OCI-LY7 (cell line): ENCODE measurements at regions of chr6 and their contacts with region 1.

Region 1: DNA sequence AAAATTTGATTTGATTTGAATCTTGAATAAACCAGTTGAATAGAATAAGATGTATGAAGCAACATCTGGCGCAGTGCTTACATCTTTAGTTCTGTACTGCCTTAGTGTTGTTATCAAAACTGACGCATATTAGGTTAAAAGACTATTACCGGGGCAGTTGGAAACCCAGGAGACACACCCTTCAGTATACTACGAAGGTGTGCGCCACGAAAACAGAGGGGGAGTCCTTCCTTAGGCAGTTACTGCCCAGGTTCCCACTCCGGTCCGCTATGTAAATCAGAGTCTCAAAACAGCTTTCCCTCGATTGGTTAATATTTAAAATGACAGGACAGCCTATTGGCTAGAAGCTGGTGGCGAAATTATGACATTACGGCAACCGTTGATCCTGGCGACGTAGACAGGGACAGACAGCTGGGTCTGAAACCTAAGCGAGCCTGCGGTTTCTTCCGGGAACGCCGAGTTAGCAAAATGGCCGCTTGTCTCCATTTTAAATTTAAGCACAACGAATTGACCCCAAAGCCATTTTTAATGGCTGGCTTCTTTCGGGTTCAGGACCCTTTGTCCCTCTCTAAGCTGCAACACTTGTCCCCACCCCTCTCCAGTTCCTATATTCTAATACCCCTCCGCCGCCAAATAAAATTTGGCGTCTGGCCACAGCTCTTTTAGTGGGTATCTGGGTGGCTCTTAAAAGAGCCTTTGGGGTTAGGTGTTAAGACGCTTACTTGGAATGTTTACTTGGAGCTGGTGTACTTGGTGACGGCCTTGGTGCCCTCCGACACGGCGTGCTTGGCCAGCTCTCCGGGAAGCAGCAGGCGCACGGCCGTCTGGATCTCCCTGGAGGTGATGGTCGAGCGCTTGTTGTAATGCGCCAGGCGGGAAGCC is 35.8 kb downstream of the HFE start:
- DNase-seq: peak; percentile 99
- H3K4me3 ChIP-seq: peak overlapping the region; percentile 72
- H3K27ac ChIP-seq: peak overlapping the region; percentile 99
- H3K4me1 ChIP-seq: peaks cover 60% of the 10 kb centered on the region
- CTCF ChIP-seq: no peak

Region 2: DNA sequence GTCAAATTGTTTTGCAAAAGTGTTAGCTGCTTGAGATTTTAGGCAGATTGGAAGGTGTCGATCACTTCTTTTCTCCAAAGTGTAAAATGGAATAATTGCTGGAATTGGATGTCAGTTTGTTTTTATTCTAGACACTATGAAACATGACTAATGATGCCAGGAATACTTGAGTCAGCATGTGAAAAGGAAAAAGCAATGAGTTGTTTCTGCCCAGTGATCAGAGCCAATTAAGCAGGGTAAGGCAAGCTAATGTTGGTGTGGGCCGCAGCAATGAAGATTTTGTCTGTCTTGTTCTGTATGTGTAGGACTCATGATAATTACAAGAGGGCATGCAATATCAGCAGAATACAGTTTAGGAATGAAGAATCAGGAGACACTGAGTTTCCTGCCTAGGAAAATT is 733.6 kb before region 1 on chr6:
- CTCF ChIA-PET with region 1: no interaction called
- POLR2A ChIA-PET with region 1: interaction called, 4 read pairs
- intact Hi-C with region 1: loop called (anchors 10 kb)
- DNase-seq: no peak
- H3K4me3 ChIP-seq: peak overlapping the region; percentile 60
- H3K27ac ChIP-seq: peak overlapping the region; percentile 99
- H3K4me1 ChIP-seq: peaks cover 94% of the 10 kb centered on the region
- CTCF ChIP-seq: no peak

Region 3: DNA sequence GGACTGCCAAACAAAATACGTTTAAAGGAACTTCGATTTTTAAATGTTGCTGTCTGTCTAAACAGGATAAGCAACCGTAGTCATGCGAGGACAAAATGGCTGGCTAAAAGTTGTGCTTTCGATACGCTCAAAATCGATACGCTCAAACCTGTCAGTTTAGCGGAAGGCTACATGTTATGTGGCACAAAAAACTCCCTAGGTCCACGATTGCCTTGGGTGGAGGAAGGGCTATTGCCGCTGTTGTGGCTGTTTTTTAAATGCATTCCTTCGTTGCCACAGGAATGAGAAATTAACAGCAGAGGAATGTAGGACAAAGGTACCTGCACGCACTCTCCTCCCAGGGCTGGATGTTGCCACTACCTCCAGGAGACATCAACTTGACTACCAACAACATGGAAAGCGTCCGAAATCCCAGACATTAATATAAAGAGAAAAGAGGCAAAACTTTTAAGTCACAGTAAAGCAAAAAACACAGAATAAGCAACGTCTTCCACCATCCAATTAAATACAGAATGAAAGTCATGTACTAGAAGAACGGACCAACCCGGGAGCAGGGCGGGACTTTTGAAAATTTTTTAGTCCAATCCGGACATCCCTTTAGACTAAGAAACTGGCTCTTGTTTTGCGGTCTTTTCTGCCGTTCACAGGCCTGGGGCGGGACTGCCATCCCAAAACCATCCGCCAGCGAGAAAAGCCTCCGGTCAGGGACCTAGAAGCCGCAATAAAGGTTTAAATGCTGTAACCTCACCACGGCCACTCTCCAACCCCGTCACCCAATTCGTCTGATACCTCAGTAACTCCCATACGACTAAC is 68.0 kb before region 1 on chr6:
- CTCF ChIA-PET with region 1: no interaction called
- POLR2A ChIA-PET with region 1: interaction called, 23 read pairs
- intact Hi-C with region 1: loop called (anchors 1 kb)
- DNase-seq: peak; percentile 93
- H3K4me3 ChIP-seq: peak overlapping the region; percentile 70
- H3K27ac ChIP-seq: peak overlapping the region; percentile 93
- H3K4me1 ChIP-seq: peaks cover 41% of the 10 kb centered on the region
- CTCF ChIP-seq: no peak

Region 4: GRCh38 chr6:26156076-26156849 is 33.2 kb after region 1 on chr6:
- CTCF ChIA-PET with region 1: no interaction called
- POLR2A ChIA-PET with region 1: interaction called, 330 read pairs
- intact Hi-C with region 1: loop called (anchors 1 kb)
- DNase-seq: peak; percentile 88
- H3K4me3 ChIP-seq: peak overlapping the region; percentile 79
- H3K27ac ChIP-seq: peak overlapping the region; percentile 99
- H3K4me1 ChIP-seq: peaks cover 28% of the 10 kb centered on the region
- CTCF ChIP-seq: no peak

Region 5: DNA sequence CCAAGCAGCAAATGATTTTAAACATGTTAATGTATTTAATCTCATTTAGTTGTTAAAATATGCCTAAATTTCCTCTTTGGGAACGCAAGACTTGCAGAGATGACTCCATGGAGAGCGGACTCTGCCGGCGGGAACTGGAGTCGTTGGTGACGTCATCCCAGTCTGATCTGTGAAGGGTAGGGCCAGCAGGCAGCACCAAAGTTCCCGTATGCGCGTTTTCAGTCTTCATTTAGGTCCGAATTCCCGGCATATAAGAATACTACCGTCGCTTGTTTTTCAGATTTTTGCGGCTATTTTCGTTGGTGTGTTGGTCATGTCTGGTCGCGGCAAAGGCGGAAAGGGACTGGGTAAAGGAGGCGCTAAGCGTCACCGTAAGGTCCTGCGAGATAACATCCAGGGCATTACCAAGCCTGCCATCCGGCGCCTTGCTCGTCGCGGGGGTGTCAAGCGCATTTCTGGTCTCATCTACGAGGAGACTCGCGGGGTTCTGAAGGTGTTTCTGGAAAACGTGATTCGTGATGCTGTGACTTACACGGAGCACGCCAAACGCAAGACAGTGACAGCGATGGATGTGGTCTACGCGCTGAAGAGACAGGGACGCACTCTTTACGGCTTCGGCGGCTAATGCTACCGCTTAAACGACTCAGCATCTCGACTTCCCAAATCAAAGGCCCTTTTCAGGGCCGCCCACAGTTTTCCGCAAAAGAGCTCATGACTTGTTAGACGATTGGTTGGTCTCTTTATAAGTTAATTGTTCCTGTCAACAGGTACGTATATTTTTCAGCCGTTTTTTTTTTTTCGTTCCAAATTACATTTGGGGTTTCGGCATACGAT is 81.5 kb after region 1 on chr6:
- CTCF ChIA-PET with region 1: no interaction called
- POLR2A ChIA-PET with region 1: interaction called, 76 read pairs
- intact Hi-C with region 1: loop called (anchors 2 kb)
- DNase-seq: peak; percentile 98
- H3K4me3 ChIP-seq: peak overlapping the region; percentile 79
- H3K27ac ChIP-seq: peak overlapping the region; percentile 93
- H3K4me1 ChIP-seq: peaks cover 63% of the 10 kb centered on the region
- CTCF ChIP-seq: peak; percentile 61

Region 6: DNA sequence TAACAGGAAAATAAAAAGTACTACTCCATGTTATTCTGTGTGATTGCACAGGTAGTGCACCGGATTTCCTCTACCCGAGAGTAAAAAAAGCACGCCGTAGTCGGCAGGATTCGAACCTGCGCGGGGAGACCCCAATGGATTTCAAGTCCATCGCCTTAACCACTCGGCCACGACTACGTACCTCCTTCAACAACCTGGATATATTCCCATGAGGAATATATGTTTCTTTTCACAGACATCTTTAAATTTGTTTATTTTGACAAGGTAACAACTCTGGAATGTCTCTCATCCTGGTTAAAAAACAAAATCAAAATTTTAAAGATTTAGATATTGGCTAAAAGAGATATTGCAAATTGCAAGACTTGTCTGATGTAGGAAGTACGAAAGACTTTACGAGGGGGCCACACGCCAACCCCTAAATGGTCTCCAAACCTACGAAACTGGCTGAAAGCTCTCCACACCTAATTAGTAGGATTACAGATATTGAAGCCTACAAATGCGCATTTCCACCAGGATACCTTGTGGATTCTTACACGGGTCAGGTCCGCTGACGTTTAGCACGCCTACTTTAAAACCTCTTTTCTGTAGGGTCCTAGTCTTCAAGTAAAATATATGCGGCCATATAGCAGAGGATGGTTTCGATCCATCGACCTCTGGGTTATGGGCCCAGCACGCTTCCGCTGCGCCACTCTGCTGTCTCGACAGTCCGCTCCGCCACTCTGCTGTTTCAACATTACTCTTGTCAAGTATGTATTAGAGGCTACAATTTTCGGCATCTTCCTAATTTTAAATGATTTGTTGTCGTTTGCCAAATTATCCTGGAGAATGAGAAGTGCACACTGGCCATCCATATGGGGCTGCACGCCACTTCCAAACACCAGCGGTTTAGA is 189.7 kb after region 1 on chr6:
- CTCF ChIA-PET with region 1: no interaction called
- POLR2A ChIA-PET with region 1: no interaction called
- intact Hi-C with region 1: no loop called
- DNase-seq: peak; percentile 80
- H3K4me3 ChIP-seq: peak overlapping the region; percentile 71
- H3K27ac ChIP-seq: peak overlapping the region; percentile 43
- H3K4me1 ChIP-seq: peaks cover 28% of the 10 kb centered on the region
- CTCF ChIP-seq: no peak

Region 7: GRCh38 chr6:27132532-27133280 is 1009.7 kb after region 1 on chr6:
- CTCF ChIA-PET with region 1: no interaction called
- POLR2A ChIA-PET with region 1: interaction called, 3 read pairs
- intact Hi-C with region 1: loop called (anchors 2 kb)
- DNase-seq: peak; percentile 98
- H3K4me3 ChIP-seq: peak overlapping the region; percentile 79
- H3K27ac ChIP-seq: peak overlapping the region; percentile 99
- H3K4me1 ChIP-seq: peaks cover 74% of the 10 kb centered on the region
- CTCF ChIP-seq: no peak

Region 8: GRCh38 chr6:27871924-27872638 is 1749.0 kb after region 1 on chr6:
- CTCF ChIA-PET with region 1: no interaction called
- POLR2A ChIA-PET with region 1: interaction called, 17 read pairs
- intact Hi-C with region 1: loop called (anchors 2 kb)
- DNase-seq: peak; percentile 95
- H3K4me3 ChIP-seq: peak overlapping the region; percentile 69
- H3K27ac ChIP-seq: peak overlapping the region; percentile 99
- H3K4me1 ChIP-seq: peaks cover 71% of the 10 kb centered on the region
- CTCF ChIP-seq: peak; percentile 44